Naive thymus-derived CD4-positive, alpha-beta T cell (primary cell): ENCODE measurements at regions of chr6 and their contacts with region 1.

Region 1: GRCh38 chr6:27237089-27237803 is 10.3 kb upstream of the PRSS16 start:
- DNase-seq: peak in 5 of 9 donors; percentile 16 to 50 (median 29)
- ATAC-seq: no peak
- H3K4me3 ChIP-seq: no peak overlapping the region
- H3K4me3 Mint-ChIP-seq: peak overlapping the region in 6 of 10 donors; percentile 7 to 78 (median 43)
- H3K27ac ChIP-seq: no peak overlapping the region
- H3K27ac Mint-ChIP-seq: peak overlapping the region in 6 of 9 donors; percentile 43 to 76 (median 52)
- H3K4me1 ChIP-seq: peaks cover 0 to 6% of the 10 kb centered on the region in 2 donors
- H3K4me1 Mint-ChIP-seq: peaks cover 3 to 30% (median 18%) of the 10 kb centered on the region in 7 donors
- H3K27me3 ChIP-seq: peaks cover 10 to 42% of the 10 kb centered on the region in 2 donors
- H3K27me3 Mint-ChIP-seq: peaks cover 63 to 82% (median 80%) of the 10 kb centered on the region in 5 donors

Region 2: GRCh38 chr6:27224729-27225128 is 12.5 kb before region 1 on chr6:
- CTCF ChIA-PET with region 1: no interaction called
- POLR2A ChIA-PET with region 1: no interaction called
- intact Hi-C with region 1: no loop called
- DNase-seq: no peak
- ATAC-seq: no peak
- H3K4me3 ChIP-seq: no peak overlapping the region
- H3K4me3 Mint-ChIP-seq: no peak overlapping the region
- H3K27ac ChIP-seq: no peak overlapping the region
- H3K27ac Mint-ChIP-seq: no peak overlapping the region
- H3K4me1 ChIP-seq: no peaks in the 10 kb centered on the region
- H3K4me1 Mint-ChIP-seq: no peaks in the 10 kb centered on the region
- H3K27me3 ChIP-seq: peaks cover 7 to 9% of the 10 kb centered on the region in 2 donors
- H3K27me3 Mint-ChIP-seq: peaks cover 29 to 86% (median 82%) of the 10 kb centered on the region in 5 donors

Region 3: DNA sequence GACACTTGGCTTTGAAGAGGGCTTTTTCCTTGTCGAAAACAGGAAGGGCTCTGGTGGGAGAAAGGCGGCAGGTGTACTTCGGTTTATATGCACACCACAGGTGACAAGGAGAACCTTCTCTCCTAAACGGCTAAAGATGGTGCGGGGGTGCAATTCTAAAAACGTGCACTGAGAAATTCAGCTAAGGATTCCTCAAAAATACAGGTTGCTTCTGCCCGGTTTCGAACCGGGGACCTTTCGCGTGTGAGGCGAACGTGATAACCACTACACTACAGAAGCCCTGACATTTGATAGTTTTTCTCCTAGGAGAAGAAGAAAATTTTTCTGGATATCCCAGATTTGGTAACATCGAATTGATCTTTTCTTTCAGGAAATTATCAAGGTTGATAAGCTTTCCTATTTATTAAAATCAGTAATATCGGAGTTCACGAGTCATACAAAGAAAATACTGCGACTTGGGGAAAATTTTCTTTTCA is 42.9 kb after region 1 on chr6:
- CTCF ChIA-PET with region 1: no interaction called
- POLR2A ChIA-PET with region 1: no interaction called
- intact Hi-C with region 1: loop called in 1 of 2 experiments (anchors 5 kb)
- DNase-seq: peak in 1 of 9 donors; percentile 13
- ATAC-seq: no peak
- H3K4me3 ChIP-seq: no peak overlapping the region
- H3K4me3 Mint-ChIP-seq: peak overlapping the region in 5 of 10 donors; percentile 28 to 51 (median 44)
- H3K27ac ChIP-seq: no peak overlapping the region
- H3K27ac Mint-ChIP-seq: peak overlapping the region in 5 of 9 donors; percentile 59 to 83 (median 77)
- H3K4me1 ChIP-seq: no peaks in the 10 kb centered on the region
- H3K4me1 Mint-ChIP-seq: peaks cover 0 to 19% (median 4%) of the 10 kb centered on the region in 7 donors
- H3K27me3 ChIP-seq: peaks cover 32 to 52% of the 10 kb centered on the region in 2 donors
- H3K27me3 Mint-ChIP-seq: peaks cover 74 to 88% (median 86%) of the 10 kb centered on the region in 5 donors

Region 4: GRCh38 chr6:27452496-27452897 is 215.3 kb after region 1 on chr6:
- CTCF ChIA-PET with region 1: no interaction called
- POLR2A ChIA-PET with region 1: no interaction called
- intact Hi-C with region 1: no loop called
- DNase-seq: no peak
- ATAC-seq: no peak
- H3K4me3 ChIP-seq: no peak overlapping the region
- H3K4me3 Mint-ChIP-seq: no peak overlapping the region
- H3K27ac ChIP-seq: no peak overlapping the region
- H3K27ac Mint-ChIP-seq: no peak overlapping the region
- H3K4me1 ChIP-seq: no peaks in the 10 kb centered on the region
- H3K4me1 Mint-ChIP-seq: peaks cover 0 to 2% (median 0%) of the 10 kb centered on the region in 7 donors
- H3K27me3 ChIP-seq: no peaks in the 10 kb centered on the region
- H3K27me3 Mint-ChIP-seq: no peaks in the 10 kb centered on the region